ENCODE measurements at regions of chr3 and their contacts with region 1.

Region 1: DNA sequence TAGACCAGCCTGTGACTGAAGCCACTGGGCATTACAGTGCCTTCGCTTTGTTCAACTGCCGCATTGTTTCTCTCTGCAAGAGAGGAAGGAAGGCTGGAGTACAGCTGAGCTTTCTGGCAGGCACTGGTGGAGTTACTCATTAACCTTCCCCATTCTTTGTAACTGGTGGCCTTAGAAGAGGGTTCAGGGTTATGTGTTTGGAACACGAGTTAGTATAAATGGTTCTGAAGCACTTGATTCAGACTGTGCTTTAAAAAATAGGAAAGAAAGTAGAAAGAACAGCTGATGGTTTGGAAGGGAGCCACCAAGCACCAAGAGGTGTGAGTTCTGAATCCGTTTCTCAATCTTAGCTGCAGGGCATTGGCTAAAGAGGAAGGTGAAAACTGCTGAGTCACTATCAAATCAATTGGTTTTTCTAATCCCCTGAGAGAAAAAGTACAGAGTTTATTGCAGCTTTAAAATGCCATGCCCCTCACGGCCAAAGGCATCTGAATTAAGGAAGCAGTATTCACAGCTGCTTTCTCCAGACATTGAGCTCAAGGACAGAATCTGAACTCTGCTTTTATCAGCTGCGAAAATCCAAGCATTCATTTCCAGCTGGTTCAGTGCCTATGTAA is 3.6 kb downstream of the HGD start:
- H3K4me3 Mint-ChIP-seq: peak overlapping the region; percentile 42
- H3K27ac Mint-ChIP-seq: peak overlapping the region; percentile 79
- H3K4me1 Mint-ChIP-seq: peaks cover 36% of the 10 kb centered on the region
- H3K27me3 Mint-ChIP-seq: no peaks in the 10 kb centered on the region

Region 2: DNA sequence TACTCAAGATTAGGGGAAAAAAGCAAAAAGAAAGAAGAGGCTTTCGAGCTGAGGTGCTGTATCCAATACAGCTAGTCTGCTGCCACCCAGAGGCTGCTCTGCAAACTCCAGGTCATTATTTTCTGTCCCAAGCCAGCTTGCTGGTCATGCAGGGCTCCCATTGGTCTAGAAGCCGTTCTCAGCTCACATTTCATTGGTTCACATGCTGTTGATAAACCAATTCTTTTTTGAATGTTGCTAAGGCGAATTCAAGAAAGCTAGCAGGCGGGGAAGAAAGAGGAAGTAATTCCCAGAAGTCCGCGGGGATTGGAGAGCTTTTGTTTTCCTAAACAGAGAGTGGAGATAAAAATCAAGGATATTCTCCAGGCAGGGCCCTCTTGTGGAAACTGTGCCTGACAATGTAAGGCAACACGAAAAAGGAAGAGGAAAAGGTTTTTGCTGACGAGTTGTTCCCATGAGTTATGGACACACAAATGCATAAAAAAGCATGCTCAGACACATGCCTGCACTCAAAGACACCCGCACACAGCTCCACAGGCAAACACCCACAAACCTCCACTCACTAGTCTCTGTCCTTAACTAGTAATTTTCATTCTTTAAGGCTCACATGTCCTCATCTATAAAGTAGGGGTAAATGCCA is 261.0 kb before region 1 on chr3:
- intact Hi-C with region 1: no loop called
- H3K4me3 Mint-ChIP-seq: peak overlapping the region; percentile 65
- H3K27ac Mint-ChIP-seq: peak overlapping the region; percentile 69
- H3K4me1 Mint-ChIP-seq: peaks cover 31% of the 10 kb centered on the region
- H3K27me3 Mint-ChIP-seq: peaks cover 10% of the 10 kb centered on the region

Region 3: GRCh38 chr3:120596116-120596852 is 82.2 kb before region 1 on chr3 and contains the start of gene NDUFB4:
- intact Hi-C with region 1: loop called (anchors 5 kb)
- H3K4me3 Mint-ChIP-seq: peak within 1 kb of the TSS; percentile 88
- H3K27ac Mint-ChIP-seq: peak within 1 kb of the TSS; percentile 93
- H3K4me1 Mint-ChIP-seq: peaks cover 17% of the 10 kb centered on the region
- H3K27me3 Mint-ChIP-seq: no peaks in the 10 kb centered on the region

Measured in dendritic cell treated with granulocyte-macrophage colony-stimulating factor and Interleukin-4, amounts not matched to agents 40 ng/mL and 50 ng/mL, for 4 days (primary cell).